Left colon (tissue), 2 donors: ENCODE measurements at regions of chr20 and their contacts with region 1.

Region 1: GRCh38 chr20:17536944-17537444 is 5.8 kb upstream of the BFSP1 start:
- DNase-seq: peak; percentile 58 to 73
- ATAC-seq: peak; percentile 95

Region 2: DNA sequence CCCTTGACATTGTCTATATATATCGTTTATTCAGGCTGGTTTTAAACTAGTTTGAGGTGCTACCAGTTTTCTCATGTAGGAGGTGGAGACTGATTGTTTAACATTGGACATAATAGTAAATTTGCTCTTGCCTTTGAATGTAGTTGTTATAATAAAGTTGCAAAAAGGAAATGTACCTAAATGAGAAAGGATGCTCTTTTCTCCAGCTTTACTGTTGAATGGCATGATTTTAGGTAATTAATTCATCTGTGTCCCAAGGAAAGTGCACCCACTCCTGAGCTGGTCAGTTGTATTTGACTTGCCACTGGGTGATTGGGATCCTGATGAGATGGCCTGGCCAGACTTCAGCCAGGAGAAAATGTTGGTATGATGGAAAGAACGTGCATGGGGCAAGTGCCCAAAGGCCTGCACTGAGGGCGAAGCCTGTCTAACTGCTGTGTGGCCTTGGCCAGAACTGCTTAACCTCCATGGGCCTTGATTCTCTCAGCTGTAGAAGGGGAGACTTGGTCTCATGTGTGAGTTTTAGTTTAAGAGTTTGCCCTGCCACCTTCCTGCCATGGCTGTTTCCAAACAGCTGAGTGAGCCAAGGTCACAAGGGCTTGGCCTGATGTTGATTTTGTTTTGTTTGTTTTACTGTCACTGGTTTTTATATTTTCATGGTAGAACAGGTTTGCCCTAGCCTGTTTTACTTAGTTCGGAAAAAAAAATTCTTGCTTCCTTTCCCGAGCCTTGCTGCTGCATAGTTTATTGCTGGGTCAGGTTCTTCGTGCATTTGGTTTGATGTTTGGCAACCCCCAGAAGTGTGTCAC is 68.1 kb after region 1 on chr20:
- intact Hi-C with region 1: loop called (anchors 5 to 10 kb)
- DNase-seq: no peak
- ATAC-seq: peak; percentile 76

Region 3: DNA sequence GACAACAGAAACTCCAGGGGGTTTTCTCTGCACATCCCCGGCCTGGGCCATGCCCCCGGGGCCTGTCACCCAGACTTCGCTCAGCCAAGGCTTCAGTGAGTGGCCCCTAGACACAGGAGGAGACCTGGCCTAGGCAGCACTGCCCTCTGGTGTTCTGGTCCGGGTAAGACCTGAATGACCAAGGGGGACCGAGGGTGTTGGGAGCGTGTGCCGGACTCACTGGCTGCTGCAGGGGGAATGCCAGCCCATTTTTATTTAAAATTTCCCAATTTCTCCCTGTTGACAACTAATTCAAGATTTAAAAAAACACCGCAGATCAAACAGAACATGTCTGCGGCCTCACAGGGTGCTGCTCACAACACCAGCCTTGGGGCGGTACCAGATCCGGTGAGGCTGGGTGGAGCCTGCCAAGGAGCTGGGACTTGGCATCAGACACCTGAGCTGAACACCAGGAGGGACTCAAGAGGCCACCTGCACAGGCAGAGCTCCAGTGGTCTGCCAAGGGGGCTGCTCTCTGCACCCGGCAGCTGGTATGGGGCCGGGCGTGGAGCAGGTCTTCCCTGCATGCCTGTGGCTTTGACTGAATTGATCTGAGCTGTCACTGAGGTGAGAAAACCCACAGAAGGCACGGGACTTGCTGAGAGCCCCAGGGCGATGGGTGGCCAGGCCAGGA is 80.7 kb after region 1 on chr20:
- intact Hi-C with region 1: loop called (anchors 5 to 10 kb)
- DNase-seq: peak in 1 of 2 donors; percentile 49
- ATAC-seq: no peak